MCF 10A (cell line): ENCODE measurements at regions of chr16 and their contacts with region 1.

Region 1: GRCh38 chr16:85821441-85822135 is 22.1 kb downstream of the COX4I1 start:
- DNase-seq: peak; percentile 68
- H3K4me3 Mint-ChIP-seq: no peak overlapping the region
- H3K27ac Mint-ChIP-seq: no peak overlapping the region
- H3K4me1 Mint-ChIP-seq: peaks cover 6% of the 10 kb centered on the region
- H3K27me3 Mint-ChIP-seq: peaks cover 27% of the 10 kb centered on the region
- CTCF ChIP-seq: peak; percentile 96

Region 2: DNA sequence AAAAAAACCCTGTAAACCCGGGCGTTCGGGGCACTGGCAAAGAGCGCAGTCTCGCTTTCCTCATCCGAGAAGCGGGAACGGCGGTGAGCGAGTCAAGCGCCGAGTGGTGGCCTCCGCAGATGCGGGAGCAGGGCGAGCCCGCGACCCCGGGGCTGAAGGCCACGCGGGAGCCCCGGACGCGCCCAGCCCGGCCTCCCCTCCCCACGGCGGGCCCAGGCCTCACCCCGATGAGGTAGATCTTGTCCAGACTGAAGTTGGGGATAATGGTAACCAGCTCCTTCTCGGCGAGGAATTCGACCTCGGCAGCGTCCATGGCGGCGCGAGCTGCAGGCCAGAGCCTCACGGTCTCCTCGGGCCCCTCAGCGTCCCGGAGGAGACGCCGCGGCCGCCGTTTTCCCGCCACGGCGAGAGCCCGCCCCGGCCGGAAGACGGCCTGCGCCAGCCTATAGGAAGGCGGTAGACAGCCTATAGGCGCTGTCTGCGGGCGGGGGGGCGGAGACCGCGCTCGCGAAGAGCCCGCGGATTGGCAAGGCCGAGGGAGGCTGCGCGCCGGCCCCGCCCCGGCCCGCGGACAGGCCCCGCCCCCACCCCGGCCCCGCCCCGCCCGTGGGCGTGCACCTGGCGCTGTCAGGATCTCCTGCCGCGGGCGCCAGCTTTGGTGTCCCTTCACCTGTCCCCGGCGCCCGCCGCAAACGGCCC is 132.9 kb before region 1 on chr16 and contains the start of gene GINS2:
- CTCF ChIA-PET with region 1: no interaction called
- POLR2A ChIA-PET with region 1: no interaction called
- intact Hi-C with region 1: no loop called
- DNase-seq: peak; percentile 87
- H3K4me3 Mint-ChIP-seq: peak within 1 kb of the TSS; percentile 59
- H3K27ac Mint-ChIP-seq: no peak within 1 kb of the TSS
- H3K4me1 Mint-ChIP-seq: no peaks in the 10 kb centered on the region
- H3K27me3 Mint-ChIP-seq: no peaks in the 10 kb centered on the region
- CTCF ChIP-seq: no peak
- total RNA-seq, gene GINS2: 6.9 and 11.3 TPM in 2 replicates

Region 3: DNA sequence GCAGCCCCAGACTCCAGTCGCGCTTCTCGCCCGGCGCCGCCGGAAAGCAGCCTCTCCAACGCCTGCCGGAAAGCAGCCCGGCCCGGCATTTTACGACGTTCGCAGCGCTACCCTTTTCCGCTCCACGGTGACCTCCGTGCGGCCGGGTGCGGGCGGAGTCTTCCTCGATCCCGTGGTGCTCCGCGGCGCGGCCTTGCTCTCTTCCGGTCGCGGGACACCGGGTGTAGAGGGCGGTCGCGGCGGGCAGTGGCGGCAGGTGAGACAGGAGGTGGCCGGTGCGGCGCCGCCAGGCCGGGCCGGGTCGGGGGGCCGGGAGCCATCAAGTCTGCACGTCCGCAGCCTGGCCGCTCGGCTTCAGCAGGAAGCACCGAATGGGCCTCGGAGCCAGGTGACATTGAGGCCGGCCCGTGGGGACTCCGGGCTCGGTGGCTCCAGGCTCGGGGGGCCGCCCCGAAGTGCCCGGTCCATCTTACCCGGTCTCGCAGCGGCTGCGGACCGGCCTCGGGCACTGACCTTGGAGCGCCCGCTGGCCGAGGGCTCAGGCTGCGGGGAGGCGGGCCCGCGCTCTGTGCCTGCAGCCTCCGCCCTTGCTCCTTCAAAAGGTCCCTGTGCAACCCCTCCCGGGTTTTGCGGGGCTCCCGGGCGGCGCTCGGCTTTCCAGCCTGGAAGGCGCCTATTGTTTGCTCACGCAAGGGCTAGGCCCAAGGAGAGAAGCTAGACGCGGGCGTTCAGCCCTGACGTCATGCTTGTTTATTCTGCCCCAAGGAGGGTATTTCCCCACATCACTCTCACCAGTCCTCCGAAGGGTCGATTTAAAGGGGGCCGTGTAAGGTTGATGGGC is 21.9 kb before region 1 on chr16 and contains the starts of genes COX4I1 and EMC8:
- CTCF ChIA-PET with region 1: interaction called, 12 read pairs
- POLR2A ChIA-PET with region 1: interaction called, 3 read pairs
- intact Hi-C with region 1: no loop called
- DNase-seq: peak; percentile 93
- H3K4me3 Mint-ChIP-seq: peak within 1 kb of the TSS; percentile 85
- H3K27ac Mint-ChIP-seq: peak within 1 kb of the TSS; percentile 91
- H3K4me1 Mint-ChIP-seq: peaks cover 36% of the 10 kb centered on the region
- H3K27me3 Mint-ChIP-seq: no peaks in the 10 kb centered on the region
- CTCF ChIP-seq: no peak
- total RNA-seq, gene COX4I1: 618 and 642 TPM in 2 replicates
- total RNA-seq, gene EMC8: 68.5 and 71.1 TPM in 2 replicates

Region 4: GRCh38 chr16:86002178-86002900 is 180.8 kb after region 1 on chr16:
- CTCF ChIA-PET with region 1: interaction called, 11 read pairs
- POLR2A ChIA-PET with region 1: no interaction called
- intact Hi-C with region 1: no loop called
- DNase-seq: no peak
- H3K4me3 Mint-ChIP-seq: no peak overlapping the region
- H3K27ac Mint-ChIP-seq: no peak overlapping the region
- H3K4me1 Mint-ChIP-seq: peaks cover 6% of the 10 kb centered on the region
- H3K27me3 Mint-ChIP-seq: peaks cover 51% of the 10 kb centered on the region
- CTCF ChIP-seq: no peak

Region 5: GRCh38 chr16:86016201-86016871 is 194.7 kb after region 1 on chr16:
- CTCF ChIA-PET with region 1: interaction called, 125 read pairs
- POLR2A ChIA-PET with region 1: interaction called, 3 read pairs
- intact Hi-C with region 1: loop called (anchors 1 kb)
- DNase-seq: peak; percentile 64
- H3K4me3 Mint-ChIP-seq: no peak overlapping the region
- H3K27ac Mint-ChIP-seq: no peak overlapping the region
- H3K4me1 Mint-ChIP-seq: no peaks in the 10 kb centered on the region
- H3K27me3 Mint-ChIP-seq: peaks cover 60% of the 10 kb centered on the region
- CTCF ChIP-seq: peak; percentile 85

Region 6: DNA sequence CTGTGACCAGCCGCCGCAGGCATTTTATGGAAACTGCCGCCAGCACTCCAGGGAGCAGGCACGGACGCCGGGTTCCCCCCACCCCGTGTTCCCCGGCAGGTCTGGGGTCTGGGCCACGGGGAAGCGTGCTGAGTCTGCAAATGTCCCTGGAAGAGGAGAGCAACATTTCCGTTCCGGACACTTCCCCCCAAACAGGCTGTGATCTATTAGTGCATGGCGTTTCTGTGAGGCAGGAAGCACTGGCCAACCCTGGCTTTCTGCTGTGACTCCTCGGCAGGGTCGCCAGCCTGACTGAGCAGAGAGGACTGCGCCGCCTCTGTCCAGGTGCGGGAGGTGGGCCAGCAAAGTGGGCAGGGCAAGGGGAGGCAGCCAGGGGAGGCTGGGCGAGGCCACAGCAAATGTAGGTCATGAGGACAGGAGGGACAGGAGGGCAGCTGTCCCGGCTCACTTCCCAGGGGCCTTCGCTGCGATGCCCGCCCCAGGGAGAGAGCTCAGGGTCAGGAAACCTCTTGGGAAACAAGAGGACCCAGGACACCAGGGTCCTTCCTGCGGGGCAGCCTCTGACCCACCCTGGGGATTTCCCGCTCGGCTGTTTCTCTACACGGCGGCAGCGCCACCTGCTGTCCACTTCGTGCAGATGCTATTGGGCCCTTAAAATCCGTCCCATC is 698.2 kb after region 1 on chr16:
- CTCF ChIA-PET with region 1: interaction called, 34 read pairs
- POLR2A ChIA-PET with region 1: interaction called, 4 read pairs
- intact Hi-C with region 1: loop called (anchors 1 kb)
- DNase-seq: peak; percentile 50
- H3K4me3 Mint-ChIP-seq: no peak overlapping the region
- H3K27ac Mint-ChIP-seq: no peak overlapping the region
- H3K4me1 Mint-ChIP-seq: no peaks in the 10 kb centered on the region
- H3K27me3 Mint-ChIP-seq: peaks cover 43% of the 10 kb centered on the region
- CTCF ChIP-seq: peak; percentile 83